Posterior vena cava (tissue), 2 donors: ENCODE measurements at regions of chr7 and their contacts with region 1.

Region 1: GRCh38 chr7:134690016-134690415 is 43.4 kb downstream of the BPGM start:
- DNase-seq: no peak

Region 2: DNA sequence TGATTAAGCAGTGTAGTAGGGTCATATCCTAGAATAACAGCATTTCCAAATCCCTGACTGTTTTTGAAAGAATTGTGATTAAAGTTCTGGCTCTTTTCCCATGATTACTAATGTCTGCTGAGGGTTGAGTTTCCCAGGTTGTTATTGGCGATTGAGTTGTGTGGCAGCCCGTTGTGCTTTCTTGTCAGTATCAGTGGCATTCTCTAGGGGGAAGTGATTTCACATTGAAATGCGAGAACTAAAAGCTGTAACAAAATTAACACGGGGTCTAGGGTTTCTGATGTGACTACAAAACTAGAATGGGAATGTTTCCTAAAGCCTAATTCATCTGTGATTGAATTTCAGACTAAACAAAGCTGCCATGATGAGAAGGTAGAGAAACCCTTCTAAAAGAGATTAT is 1087.7 kb before region 1 on chr7:
- intact Hi-C with region 1: no loop called
- DNase-seq: no peak

Region 3: GRCh38 chr7:134757938-134758337 is 67.9 kb after region 1 on chr7:
- intact Hi-C with region 1: loop called in 1 of 2 experiments (anchors 5 kb)
- DNase-seq: no peak

Region 4: DNA sequence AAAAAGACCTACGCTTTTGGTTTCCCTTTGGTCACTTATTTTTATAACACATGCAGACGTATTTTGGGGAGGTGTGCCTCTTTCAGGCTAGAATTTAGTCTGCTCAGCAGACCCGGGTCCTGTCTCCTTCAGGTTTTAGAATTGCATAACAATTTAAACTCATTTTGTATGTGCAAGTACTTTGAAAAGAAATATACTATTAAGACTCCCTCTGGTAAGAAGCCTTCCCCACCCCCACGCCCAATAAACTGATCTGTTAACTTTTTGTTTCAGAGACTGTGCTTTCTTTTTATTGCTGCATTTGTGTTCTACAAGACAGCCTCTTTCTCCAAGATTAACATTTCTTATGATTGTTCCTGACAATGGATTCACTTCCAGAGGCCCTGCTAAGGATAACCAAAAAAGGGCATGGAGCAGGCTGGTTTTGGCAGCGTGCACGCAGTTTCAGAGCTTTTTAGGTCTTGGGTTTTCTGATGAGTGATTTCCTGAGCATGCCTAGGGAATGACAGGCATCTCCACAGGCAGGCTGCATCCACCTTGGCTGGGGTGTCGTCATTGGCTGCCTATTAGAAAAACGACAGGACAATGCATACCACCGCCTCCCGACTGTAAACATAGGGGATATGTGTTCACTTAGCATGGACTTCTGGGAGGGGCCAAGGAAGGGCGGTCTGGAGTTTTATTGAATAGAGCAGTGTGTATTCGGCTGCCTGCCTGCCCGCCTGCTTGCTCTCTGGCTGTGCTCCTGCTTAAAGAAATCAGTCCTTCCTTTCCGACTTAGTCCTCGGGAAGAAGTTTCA is 89.1 kb after region 1 on chr7 and contains the start of gene CALD1:
- intact Hi-C with region 1: loop called in 1 of 2 experiments (anchors 5 kb)
- DNase-seq: peak; percentile 90
- total RNA-seq, gene CALD1: 1,459 to 1,514 TPM

Region 5: GRCh38 chr7:134954197-134955082 is 264.4 kb after region 1 on chr7:
- intact Hi-C with region 1: loop called (anchors 5 to 10 kb)
- DNase-seq: no peak

Region 6: DNA sequence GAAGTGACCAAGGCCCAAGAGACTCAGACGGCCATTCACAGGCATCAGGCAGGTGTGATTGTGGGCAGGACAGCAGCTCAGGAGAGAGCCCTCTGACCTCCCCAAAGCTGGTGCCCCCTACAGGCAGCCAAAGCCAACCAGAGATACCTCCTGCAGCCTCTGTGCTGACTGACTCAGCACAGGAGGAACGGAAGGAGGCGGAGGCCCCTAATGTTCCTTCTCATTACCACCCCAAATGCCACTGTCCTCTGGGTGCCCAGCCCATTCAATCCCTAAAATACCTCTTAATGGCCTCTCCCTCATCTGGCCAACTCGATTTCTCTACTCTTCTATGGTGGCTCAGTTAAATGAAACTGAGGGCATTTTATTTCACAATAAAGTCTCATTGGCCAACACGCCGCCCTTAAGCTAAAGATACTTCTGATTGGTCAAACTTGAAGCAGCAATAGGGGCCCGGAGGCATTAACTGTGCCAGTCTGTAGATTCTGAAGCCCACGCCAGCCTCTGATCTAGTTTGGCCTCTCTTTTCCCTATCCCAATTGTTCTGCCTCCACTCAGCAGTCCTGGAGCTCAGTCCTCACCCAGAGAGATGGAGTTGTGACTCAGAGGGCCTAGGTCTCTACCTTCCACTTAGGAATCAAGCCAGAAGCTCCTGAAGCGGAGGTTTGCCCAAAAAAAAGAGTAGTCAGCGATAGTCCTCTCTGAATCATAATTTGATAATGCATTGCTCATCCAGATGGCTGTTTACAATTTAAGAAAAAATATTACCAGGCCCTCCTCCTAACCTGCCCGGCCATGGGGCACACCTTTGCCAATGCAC is 479.3 kb after region 1 on chr7:
- intact Hi-C with region 1: loop called (anchors 10 kb)
- DNase-seq: no peak